MCF 10A (cell line): ENCODE measurements at regions of chr19 and their contacts with region 1.

Region 1: DNA sequence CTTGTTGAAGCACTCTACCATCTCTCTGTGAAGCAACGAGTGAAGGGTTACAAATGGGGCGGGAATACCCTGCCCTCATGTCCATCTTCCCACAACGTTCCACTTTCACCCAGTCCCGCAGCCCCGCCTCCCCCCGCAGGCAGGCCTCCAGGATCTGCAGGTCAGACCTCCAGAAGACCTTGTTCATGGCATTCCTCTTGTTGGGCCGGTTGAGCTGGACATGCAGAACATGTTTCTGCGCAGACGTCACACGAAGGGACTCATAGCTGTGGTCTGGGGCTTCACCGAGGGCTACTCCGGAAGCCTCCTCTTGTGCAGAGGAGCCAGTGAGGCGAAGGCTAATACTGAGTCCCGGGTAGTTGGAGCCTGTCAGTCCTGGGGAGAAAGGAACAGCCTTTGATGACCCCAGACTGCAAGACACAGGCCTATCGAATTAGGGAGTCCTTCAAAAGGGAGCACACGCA is 420 bp downstream of the ECH1 start:
- DNase-seq: peak; percentile 73
- H3K4me3 Mint-ChIP-seq: peak overlapping the region; percentile 77
- H3K27ac Mint-ChIP-seq: peak overlapping the region; percentile 82
- H3K4me1 Mint-ChIP-seq: peaks cover 17% of the 10 kb centered on the region
- H3K27me3 Mint-ChIP-seq: no peaks in the 10 kb centered on the region
- CTCF ChIP-seq: no peak

Region 2: GRCh38 chr19:38559428-38560401 is 271.5 kb before region 1 on chr19:
- CTCF ChIA-PET with region 1: no interaction called
- POLR2A ChIA-PET with region 1: no interaction called
- intact Hi-C with region 1: loop called (anchors 5 kb)
- DNase-seq: peak; percentile 87
- H3K4me3 Mint-ChIP-seq: peak overlapping the region; percentile 10
- H3K27ac Mint-ChIP-seq: peak overlapping the region; percentile 82
- H3K4me1 Mint-ChIP-seq: peaks cover 28% of the 10 kb centered on the region
- H3K27me3 Mint-ChIP-seq: no peaks in the 10 kb centered on the region
- CTCF ChIP-seq: no peak

Region 3: GRCh38 chr19:38741711-38742110 is 89.5 kb before region 1 on chr19:
- CTCF ChIA-PET with region 1: no interaction called
- POLR2A ChIA-PET with region 1: no interaction called
- intact Hi-C with region 1: no loop called
- DNase-seq: no peak
- H3K4me3 Mint-ChIP-seq: no peak overlapping the region
- H3K27ac Mint-ChIP-seq: no peak overlapping the region
- H3K4me1 Mint-ChIP-seq: no peaks in the 10 kb centered on the region
- H3K27me3 Mint-ChIP-seq: no peaks in the 10 kb centered on the region
- CTCF ChIP-seq: no peak

Region 4: GRCh38 chr19:38773470-38774189 is 57.5 kb before region 1 on chr19 and contains the start of gene LGALS7:
- CTCF ChIA-PET with region 1: no interaction called
- POLR2A ChIA-PET with region 1: interaction called, 5 read pairs
- intact Hi-C with region 1: loop called (anchors 2 kb)
- DNase-seq: no peak
- H3K4me3 Mint-ChIP-seq: no peak within 1 kb of the TSS
- H3K27ac Mint-ChIP-seq: peak within 1 kb of the TSS; percentile 69
- H3K4me1 Mint-ChIP-seq: peaks cover 15% of the 10 kb centered on the region
- H3K27me3 Mint-ChIP-seq: no peaks in the 10 kb centered on the region
- CTCF ChIP-seq: no peak
- total RNA-seq, gene LGALS7: 1.1 TPM in 1 of 2 replicates, not detected in the other

Region 5: DNA sequence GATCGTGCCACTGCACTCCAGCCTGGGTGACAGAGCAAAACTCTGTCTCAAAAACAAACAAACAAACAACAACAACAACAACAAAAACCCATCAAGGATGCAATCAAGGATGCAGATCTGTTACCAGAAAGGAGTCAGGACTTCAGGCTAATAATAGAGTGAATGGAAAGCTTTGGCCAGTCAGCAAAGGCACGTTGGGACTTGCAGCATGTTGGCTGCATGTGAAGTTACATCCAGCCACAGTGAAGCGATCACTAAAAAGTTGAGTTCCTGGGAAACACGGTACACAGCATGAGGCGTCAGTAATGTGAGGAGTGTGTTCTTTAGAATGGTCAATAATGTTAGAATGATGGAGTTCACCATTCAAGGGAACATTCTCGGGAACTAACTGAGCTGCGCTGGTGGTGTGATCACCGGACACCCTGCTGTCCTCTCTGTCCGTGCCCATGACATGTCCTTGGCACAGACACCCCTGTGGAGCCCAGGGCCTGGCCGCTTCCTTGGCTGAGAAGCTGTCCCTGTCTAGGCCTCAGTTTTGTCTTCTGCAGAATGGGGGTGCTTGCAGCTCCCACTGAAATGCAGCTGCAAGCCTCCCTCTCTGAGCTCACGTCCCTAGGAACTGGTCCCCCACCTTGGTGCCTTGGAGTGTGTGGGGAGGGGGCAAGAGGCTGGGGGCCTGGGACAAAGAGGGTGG is 44.5 kb before region 1 on chr19:
- CTCF ChIA-PET with region 1: no interaction called
- POLR2A ChIA-PET with region 1: interaction called, 10 read pairs
- intact Hi-C with region 1: no loop called
- DNase-seq: peak; percentile 69
- H3K4me3 Mint-ChIP-seq: no peak overlapping the region
- H3K27ac Mint-ChIP-seq: peak overlapping the region; percentile 12
- H3K4me1 Mint-ChIP-seq: peaks cover 14% of the 10 kb centered on the region
- H3K27me3 Mint-ChIP-seq: no peaks in the 10 kb centered on the region
- CTCF ChIP-seq: no peak

Region 6: GRCh38 chr19:38792250-38793111 is 38.7 kb before region 1 on chr19:
- CTCF ChIA-PET with region 1: no interaction called
- POLR2A ChIA-PET with region 1: interaction called, 13 read pairs
- intact Hi-C with region 1: loop called (anchors 5 kb)
- DNase-seq: no peak
- H3K4me3 Mint-ChIP-seq: peak overlapping the region; percentile 24
- H3K27ac Mint-ChIP-seq: peak overlapping the region; percentile 72
- H3K4me1 Mint-ChIP-seq: peaks cover 12% of the 10 kb centered on the region
- H3K27me3 Mint-ChIP-seq: no peaks in the 10 kb centered on the region
- CTCF ChIP-seq: no peak

Region 7: GRCh38 chr19:38799071-38799744 is 32.0 kb before region 1 on chr19:
- CTCF ChIA-PET with region 1: no interaction called
- POLR2A ChIA-PET with region 1: interaction called, 13 read pairs
- intact Hi-C with region 1: loop called (anchors 5 kb)
- DNase-seq: no peak
- H3K4me3 Mint-ChIP-seq: no peak overlapping the region
- H3K27ac Mint-ChIP-seq: no peak overlapping the region
- H3K4me1 Mint-ChIP-seq: peaks cover 6% of the 10 kb centered on the region
- H3K27me3 Mint-ChIP-seq: no peaks in the 10 kb centered on the region
- CTCF ChIP-seq: no peak

Region 8: GRCh38 chr19:38849860-38850435 is 18.8 kb after region 1 on chr19 and contains the start of gene HNRNPL:
- CTCF ChIA-PET with region 1: no interaction called
- POLR2A ChIA-PET with region 1: interaction called, 21 read pairs
- intact Hi-C with region 1: no loop called
- DNase-seq: peak; percentile 100
- H3K4me3 Mint-ChIP-seq: peak within 1 kb of the TSS; percentile 97
- H3K27ac Mint-ChIP-seq: peak within 1 kb of the TSS; percentile 99
- H3K4me1 Mint-ChIP-seq: peaks cover 18% of the 10 kb centered on the region
- H3K27me3 Mint-ChIP-seq: no peaks in the 10 kb centered on the region
- CTCF ChIP-seq: no peak
- total RNA-seq, gene HNRNPL: 288 and 421 TPM in 2 replicates